IMR-90 (cell line): ENCODE measurements at regions of chr16 and their contacts with region 1.

Region 1: DNA sequence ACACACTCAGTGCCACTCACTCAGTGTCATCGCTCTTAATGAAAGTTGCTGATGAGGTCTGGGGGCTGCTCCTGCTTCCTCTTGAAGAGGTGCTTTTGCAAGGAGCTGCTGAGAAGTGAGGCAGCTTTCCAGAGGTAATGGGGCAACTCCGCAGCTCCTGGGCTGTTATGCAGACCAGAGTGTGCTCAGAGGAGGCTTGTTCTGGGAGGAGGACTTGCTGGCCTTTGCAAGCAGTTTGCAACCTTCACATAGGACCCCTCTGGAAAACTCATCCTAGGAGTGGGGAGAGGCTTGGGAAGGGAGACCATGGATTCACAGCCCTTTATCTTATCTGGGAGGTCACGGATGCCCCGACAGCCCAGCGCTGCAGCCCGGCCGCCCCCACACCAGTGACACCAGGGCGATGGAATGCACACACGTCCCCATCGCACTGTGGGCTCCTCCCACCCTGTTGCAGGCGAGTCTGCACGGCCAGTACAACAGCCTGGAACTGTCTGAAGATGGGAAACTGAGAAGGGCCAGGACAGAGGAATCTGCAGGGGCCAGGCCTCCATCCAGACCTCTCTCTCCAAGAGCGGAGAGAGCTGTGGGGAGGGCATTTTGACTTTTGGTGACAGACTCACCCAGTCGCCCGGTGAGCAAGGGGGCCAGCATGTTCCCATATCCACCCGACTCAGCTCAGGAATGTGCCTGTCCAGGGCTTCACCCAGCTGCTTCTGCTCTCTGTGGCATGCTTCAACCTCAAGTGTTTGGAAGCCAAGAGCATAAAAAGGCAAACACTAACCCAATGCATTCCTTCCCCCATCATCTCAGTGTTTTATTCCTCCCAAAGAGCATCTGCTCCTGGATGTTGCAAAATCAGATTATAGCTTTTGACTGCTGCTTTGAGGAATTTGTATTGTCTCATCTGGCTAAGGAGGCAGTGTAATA is 78.6 kb upstream of the ZNF469 start:
- DNase-seq: peak; percentile 98
- ATAC-seq: peak; percentile 77
- H3K4me3 ChIP-seq: no peak overlapping the region
- H3K27ac ChIP-seq: peak overlapping the region; percentile 95
- H3K4me1 ChIP-seq: peaks cover 58% of the 10 kb centered on the region
- H3K27me3 ChIP-seq: no peaks in the 10 kb centered on the region
- CTCF ChIP-seq: no peak
- POLR2A ChIP-seq: peak; percentile 76
- RAD21 ChIP-seq: peak; percentile 29

Region 2: GRCh38 chr16:87950765-87951549 is 353.2 kb before region 1 on chr16 and contains the start of gene BANP:
- CTCF ChIA-PET with region 1: no interaction called
- POLR2A ChIA-PET with region 1: no interaction called
- dilution Hi-C with region 1: no loop called
- in situ Hi-C with region 1: no loop called
- intact Hi-C with region 1: loop called (anchors 10 kb)
- DNase-seq: peak; percentile 98
- ATAC-seq: peak; percentile 94
- H3K4me3 ChIP-seq: peak within 1 kb of the TSS; percentile 74
- H3K27ac ChIP-seq: peak within 1 kb of the TSS; percentile 94
- H3K4me1 ChIP-seq: peaks cover 11% of the 10 kb centered on the region
- H3K27me3 ChIP-seq: no peaks in the 10 kb centered on the region
- CTCF ChIP-seq: peak; percentile 24; the same call in 1 of the 2 replicates
- POLR2A ChIP-seq: no peak
- RAD21 ChIP-seq: 0 out of 2 replicates have a peak, but pooled peaks have one; percentile 1
- total RNA-seq, gene BANP: 16.9 and 17.4 TPM in 2 replicates

Region 3: DNA sequence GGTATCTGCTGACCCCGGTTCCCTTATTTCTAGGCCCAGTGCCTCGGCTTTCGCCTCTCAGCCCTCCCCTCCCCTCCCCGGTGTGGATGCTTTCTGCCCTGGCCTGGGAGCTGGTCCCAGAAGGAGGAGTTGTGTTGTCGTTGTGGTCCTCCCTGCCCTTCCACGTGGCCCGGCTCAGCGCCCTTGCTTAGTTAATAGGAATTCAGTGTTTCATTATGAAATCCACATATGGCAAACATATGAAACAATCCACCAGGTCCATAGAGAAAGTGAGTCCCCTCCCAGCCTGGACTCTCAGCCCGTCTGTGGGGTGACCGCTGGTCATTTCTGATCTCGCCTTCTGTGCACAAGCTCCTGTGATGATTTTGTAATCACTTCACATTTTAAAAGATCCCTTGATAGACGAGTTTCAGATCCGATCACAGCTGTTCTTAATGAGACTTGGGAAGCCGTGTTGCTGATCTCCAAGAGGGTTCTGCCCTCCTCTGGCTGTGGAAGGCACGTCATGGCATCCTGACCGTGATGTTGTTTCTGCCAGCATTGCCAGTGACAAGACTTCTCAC is 240.9 kb before region 1 on chr16:
- CTCF ChIA-PET with region 1: no interaction called
- POLR2A ChIA-PET with region 1: no interaction called
- dilution Hi-C with region 1: no loop called
- in situ Hi-C with region 1: no loop called
- intact Hi-C with region 1: loop called (anchors 10 kb)
- DNase-seq: peak; percentile 85
- ATAC-seq: peak; percentile 78
- H3K4me3 ChIP-seq: no peak overlapping the region
- H3K27ac ChIP-seq: peak overlapping the region; percentile 90
- H3K4me1 ChIP-seq: peaks cover 26% of the 10 kb centered on the region
- H3K27me3 ChIP-seq: no peaks in the 10 kb centered on the region
- CTCF ChIP-seq: peak; percentile 43
- POLR2A ChIP-seq: no peak
- RAD21 ChIP-seq: peak; percentile 54

Region 4: GRCh38 chr16:88331989-88332920 is 28.1 kb after region 1 on chr16:
- CTCF ChIA-PET with region 1: no interaction called
- POLR2A ChIA-PET with region 1: no interaction called
- dilution Hi-C with region 1: no loop called
- in situ Hi-C with region 1: no loop called
- intact Hi-C with region 1: loop called (anchors 1 kb)
- DNase-seq: peak; percentile 100
- ATAC-seq: peak; percentile 85
- H3K4me3 ChIP-seq: no peak overlapping the region
- H3K27ac ChIP-seq: peak overlapping the region; percentile 99
- H3K4me1 ChIP-seq: peaks cover 26% of the 10 kb centered on the region
- H3K27me3 ChIP-seq: no peaks in the 10 kb centered on the region
- CTCF ChIP-seq: no peak
- POLR2A ChIP-seq: peak; percentile 76
- RAD21 ChIP-seq: peak; percentile 45